ENCODE measurements at regions of chr7 and their contacts with region 1.

Region 1: DNA sequence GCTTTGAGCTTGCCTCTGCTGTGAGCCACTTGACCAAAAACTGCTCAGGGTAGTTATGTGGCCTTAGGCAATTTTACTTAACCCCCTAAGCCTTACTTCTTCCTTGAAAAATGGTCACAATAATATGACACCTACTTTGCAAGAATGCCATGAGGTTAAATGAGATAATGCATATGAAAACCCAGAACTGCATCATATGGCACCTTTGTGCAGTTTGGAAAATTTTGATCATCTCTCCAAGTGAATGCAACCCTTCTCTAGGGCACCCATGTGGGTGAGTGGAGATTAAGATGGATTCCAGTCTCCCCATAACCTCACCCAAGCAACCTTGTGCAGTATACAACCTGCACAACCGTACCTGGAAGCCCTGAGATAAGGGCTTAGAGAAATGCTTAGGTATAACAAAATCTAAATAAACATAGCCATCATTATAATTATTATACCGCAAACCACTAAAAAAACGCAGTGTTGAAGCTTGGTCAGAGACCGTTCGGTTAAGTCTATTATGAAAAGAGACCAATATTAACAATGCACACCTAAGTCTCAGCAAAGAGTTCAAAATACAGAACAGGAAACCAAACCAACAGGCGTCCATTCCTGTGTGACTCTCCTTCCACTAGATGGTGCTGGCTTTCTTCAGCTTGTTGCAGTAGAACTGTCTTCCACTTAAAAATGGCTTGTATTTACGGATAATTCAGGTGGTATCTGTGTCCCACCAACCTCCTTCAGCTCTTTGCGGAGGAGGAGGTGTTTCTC is 21.0 kb upstream of the ASB15 start:
- DNase-seq: peak in 1 of 2 donors; percentile 26
- ATAC-seq: peak; percentile 43 to 82 (median 76)
- H3K4me3 ChIP-seq: no peak overlapping the region
- H3K27ac ChIP-seq: peak overlapping the region in 1 of 10 donors; percentile 12
- H3K4me1 ChIP-seq: peaks cover 0 to 5% (median 0%) of the 10 kb centered on the region in 9 donors
- H3K27me3 ChIP-seq: no peaks in the 10 kb centered on the region
- CTCF ChIP-seq: peak; percentile 34 to 77 (median 64)

Region 2: DNA sequence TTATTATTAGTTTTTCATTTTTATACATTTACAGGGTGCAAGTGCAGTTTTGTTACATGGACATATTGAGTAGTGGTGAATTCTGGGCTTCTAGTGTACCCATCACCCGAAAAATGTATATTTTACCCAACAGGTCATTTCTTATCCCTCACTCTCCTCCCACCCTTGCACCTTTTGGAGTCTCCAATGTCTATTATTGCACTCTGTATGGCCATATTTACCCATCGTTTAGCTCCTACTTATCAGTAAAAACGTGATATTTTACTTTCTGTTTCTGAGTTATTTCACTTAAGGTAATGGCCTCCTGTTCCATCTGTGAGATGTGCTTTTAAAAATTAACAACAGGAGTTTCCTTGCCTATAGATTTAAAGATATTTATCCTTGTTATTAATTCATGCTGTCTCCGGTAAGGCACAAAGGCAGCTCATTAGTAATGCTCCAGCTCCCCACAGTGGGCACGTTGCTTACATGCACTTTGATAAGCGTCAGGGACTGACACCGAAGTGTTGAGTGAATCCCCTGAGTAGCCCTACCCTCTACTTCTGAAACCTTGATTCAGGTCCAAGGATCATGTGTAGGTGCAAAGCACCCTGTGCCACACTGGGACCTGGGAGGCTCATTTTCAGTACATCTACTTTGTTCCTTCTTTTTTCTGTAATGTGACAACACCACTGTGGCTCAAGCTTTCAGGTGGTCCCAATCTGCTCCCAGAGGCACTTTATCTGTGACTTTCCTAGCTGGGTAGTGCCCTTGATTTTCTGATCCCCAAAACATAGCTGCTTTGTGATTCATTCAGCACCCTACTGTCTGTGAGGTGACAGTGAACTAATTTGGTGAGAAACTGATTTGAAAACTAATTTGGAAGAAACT is 291.6 kb after region 1 on chr7:
- intact Hi-C with region 1: loop called in 4 of 10 experiments (anchors 5 to 10 kb)
- DNase-seq: peak; percentile 14 to 15
- ATAC-seq: peak; percentile 42 to 92 (median 82)
- H3K4me3 ChIP-seq: peak overlapping the region in 1 of 10 donors; percentile 12
- H3K27ac ChIP-seq: no peak overlapping the region
- H3K4me1 ChIP-seq: peaks cover 0 to 13% (median 0%) of the 10 kb centered on the region in 9 donors
- H3K27me3 ChIP-seq: no peaks in the 10 kb centered on the region
- CTCF ChIP-seq: peak in 8 of 9 donors; percentile 38 to 71 (median 60)